ENCODE measurements at regions of chr19 and their contacts with region 1.

Region 1: GRCh38 chr19:10928525-10929401 is at the starts of genes TIMM29 and YIPF2:
- DNase-seq: peak; percentile 99
- H3K4me3 ChIP-seq: peak within 1 kb of the TSS; percentile 71 to 95 (median 94)
- H3K27ac ChIP-seq: peak within 1 kb of the TSS; percentile 64 to 75 (median 74)
- H3K4me1 ChIP-seq: peaks cover 15 to 19% of the 10 kb centered on the region in 2 donors
- H3K27me3 ChIP-seq: no peaks in the 10 kb centered on the region
- CTCF ChIP-seq: peak in 1 of 6 experiments; percentile 9
- POLR2A ChIP-seq: peak; percentile 4 to 75
- total RNA-seq, gene TIMM29: 19.6 to 39.5 (median 33.4) TPM
- total RNA-seq, gene YIPF2: 85.1 to 127 (median 104) TPM

Region 2: GRCh38 chr19:10870955-10871603 is 57.7 kb before region 1 on chr19 and contains the start of gene CARM1:
- intact Hi-C with region 1: loop called (anchors 10 kb)
- DNase-seq: peak; percentile 99
- H3K4me3 ChIP-seq: peak within 1 kb of the TSS; percentile 70 to 79 (median 78)
- H3K27ac ChIP-seq: peak within 1 kb of the TSS; percentile 15 to 66 (median 65)
- H3K4me1 ChIP-seq: peaks cover 10% of the 10 kb centered on the region in 2 donors
- H3K27me3 ChIP-seq: no peaks in the 10 kb centered on the region
- CTCF ChIP-seq: peak in 4 of 6 experiments; percentile 25 to 96 (median 87)
- POLR2A ChIP-seq: peak in 1 of 2 donors; percentile 3
- total RNA-seq, gene CARM1: 12.2 to 14.8 (median 13.1) TPM

Region 3: DNA sequence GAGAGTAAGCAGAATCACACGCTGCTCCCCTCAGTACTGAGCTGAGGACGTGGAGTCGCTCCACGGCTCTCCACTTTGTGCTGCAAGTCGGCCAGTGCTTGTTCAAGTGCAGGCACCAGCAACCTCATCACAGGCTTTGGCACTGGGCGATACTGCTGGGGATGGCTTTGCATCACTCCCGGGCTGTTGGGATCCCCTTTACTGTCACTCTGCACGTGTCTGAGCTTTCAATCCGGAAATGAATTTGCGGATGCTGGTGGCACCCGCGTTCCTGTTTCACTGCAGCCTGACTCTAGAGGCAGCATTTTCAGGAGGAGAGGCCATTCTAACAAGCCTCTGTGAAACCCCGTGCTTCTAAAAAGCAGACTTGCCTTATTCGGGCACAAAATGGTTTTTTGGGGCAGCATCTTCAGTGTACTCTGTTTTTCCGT is 51.2 kb after region 1 on chr19:
- intact Hi-C with region 1: no loop called
- DNase-seq: no peak
- H3K4me3 ChIP-seq: no peak overlapping the region
- H3K27ac ChIP-seq: no peak overlapping the region
- H3K4me1 ChIP-seq: peaks cover 22 to 36% of the 10 kb centered on the region in 2 donors
- H3K27me3 ChIP-seq: no peaks in the 10 kb centered on the region
- CTCF ChIP-seq: no peak
- POLR2A ChIP-seq: no peak